ENCODE measurements at regions of chr11 and their contacts with region 1.

Region 1: GRCh38 chr11:6377902-6378639 is 12.2 kb upstream of the SMPD1 start:
- DNase-seq: no peak
- ATAC-seq: peak; percentile 63

Region 2: DNA sequence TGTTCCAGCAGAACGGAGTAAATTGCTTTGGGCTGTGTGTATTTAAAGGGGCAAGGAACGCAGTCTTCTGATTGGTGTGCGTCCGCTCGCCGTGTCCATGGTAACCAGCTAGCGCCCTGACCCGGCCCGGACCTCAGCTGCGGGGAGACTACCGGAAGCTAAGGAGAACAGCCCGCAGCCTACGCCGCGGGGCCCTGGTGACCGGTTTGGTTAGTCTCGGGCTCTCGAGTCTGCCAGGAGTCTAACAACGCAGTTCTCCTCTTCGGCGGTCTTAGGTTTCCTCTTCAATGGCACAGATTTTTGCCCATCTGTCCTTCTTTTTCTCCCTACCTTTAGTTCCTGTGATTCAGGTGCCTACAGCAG is 439.5 kb before region 1 on chr11:
- intact Hi-C with region 1: no loop called
- DNase-seq: peak; percentile 20
- ATAC-seq: no peak

Region 3: GRCh38 chr11:6443269-6444003 is 65.4 kb after region 1 on chr11:
- intact Hi-C with region 1: loop called (anchors 2 kb)
- DNase-seq: peak; percentile 59
- ATAC-seq: peak; percentile 80

Region 4: GRCh38 chr11:6505577-6506240 is 127.6 kb after region 1 on chr11:
- intact Hi-C with region 1: loop called (anchors 5 kb)
- DNase-seq: no peak
- ATAC-seq: peak; percentile 38